ENCODE measurements at regions of chr22 and their contacts with region 1.

Region 1: GRCh38 chr22:41621099-41621910 is at the start of gene XRCC6:
- DNase-seq: peak; percentile 100
- ATAC-seq: peak; percentile 85
- H3K4me3 ChIP-seq: peak within 1 kb of the TSS; percentile 95
- H3K27ac ChIP-seq: peak within 1 kb of the TSS; percentile 97
- H3K4me1 ChIP-seq: peaks cover 5% of the 10 kb centered on the region
- H3K27me3 ChIP-seq: no peaks in the 10 kb centered on the region
- CTCF ChIP-seq: 0 out of 6 replicates have a peak, but pooled peaks of 1 of the 3 experiments have one; percentile 5
- EP300 ChIP-seq: no peak; a peak in 1 of 4 replicates
- POLR2A ChIP-seq: peak; percentile 90
- RAD21 ChIP-seq: no peak
- polyA plus RNA-seq, gene XRCC6: 186 to 334 TPM

Region 2: GRCh38 chr22:41576877-41577276 is 44.4 kb before region 1 on chr22:
- CTCF ChIA-PET with region 1: interaction called, 3 read pairs
- POLR2A ChIA-PET with region 1: interaction called, 3 read pairs
- RAD21 ChIA-PET with region 1: interaction called, 4 read pairs
- SMC1A ChIA-PET with region 1: interaction called, 3 read pairs
- in situ Hi-C with region 1: no loop called
- intact Hi-C with region 1: loop called (anchors 2 kb)
- DNase-seq: no peak
- ATAC-seq: peak; percentile 92
- H3K4me3 ChIP-seq: no peak overlapping the region
- H3K27ac ChIP-seq: no peak overlapping the region
- H3K4me1 ChIP-seq: no peaks in the 10 kb centered on the region
- H3K27me3 ChIP-seq: no peaks in the 10 kb centered on the region
- CTCF ChIP-seq: peak; percentile 62 to 84 (median 76)
- EP300 ChIP-seq: no peak
- POLR2A ChIP-seq: no peak
- RAD21 ChIP-seq: peak; percentile 66

Region 3: DNA sequence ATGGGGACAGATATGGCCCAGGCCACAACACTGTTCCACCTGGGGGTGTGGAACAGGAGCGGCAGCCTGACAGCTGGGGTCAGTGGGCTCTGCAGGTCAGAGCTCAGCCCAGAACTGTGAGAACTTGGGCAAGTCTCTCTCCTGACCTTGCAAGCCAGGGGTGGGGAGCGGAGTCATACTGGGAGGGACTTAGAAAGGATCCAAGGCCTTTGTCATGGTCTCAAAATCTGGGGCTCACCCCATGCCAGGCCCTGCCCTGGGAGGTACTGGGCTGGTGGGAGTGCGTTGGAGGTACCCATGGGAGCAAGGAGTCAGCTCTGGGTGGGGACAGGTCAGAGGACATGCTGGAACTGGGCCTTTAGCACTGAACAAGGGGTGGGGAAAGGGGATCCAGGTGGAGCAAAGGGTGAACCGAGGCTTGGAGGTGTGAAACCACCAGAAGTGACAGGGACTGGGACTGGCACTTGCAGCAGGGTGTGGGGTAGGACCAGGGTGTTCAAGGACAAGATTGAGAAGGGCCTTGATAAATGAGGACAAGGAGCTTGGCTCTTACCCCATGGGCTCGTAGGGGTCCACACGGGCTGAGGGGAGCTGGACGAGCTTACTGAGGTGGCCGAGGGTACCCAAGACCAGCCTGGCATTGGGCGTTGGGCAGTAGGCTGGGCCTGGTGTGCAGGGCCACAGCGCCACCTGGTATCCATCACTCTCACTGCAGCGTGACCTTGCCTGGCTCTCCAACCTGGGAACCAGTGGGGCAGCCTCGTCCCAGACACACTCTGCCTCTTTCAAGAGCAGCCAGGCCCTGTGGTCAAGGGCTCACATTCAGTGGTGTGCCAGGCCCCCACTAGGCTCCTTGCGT is 24.3 kb before region 1 on chr22:
- CTCF ChIA-PET with region 1: interaction called, 29 read pairs
- POLR2A ChIA-PET with region 1: no interaction called
- RAD21 ChIA-PET with region 1: interaction called, 4 read pairs
- SMC1A ChIA-PET with region 1: interaction called, 3 read pairs
- in situ Hi-C with region 1: no loop called
- intact Hi-C with region 1: no loop called
- DNase-seq: no peak
- ATAC-seq: peak; percentile 98
- H3K4me3 ChIP-seq: no peak overlapping the region
- H3K27ac ChIP-seq: no peak overlapping the region
- H3K4me1 ChIP-seq: no peaks in the 10 kb centered on the region
- H3K27me3 ChIP-seq: no peaks in the 10 kb centered on the region
- CTCF ChIP-seq: peak; percentile 63 to 83 (median 74)
- EP300 ChIP-seq: no peak
- POLR2A ChIP-seq: no peak
- RAD21 ChIP-seq: peak; percentile 58

Region 4: GRCh38 chr22:41666661-41667258 is 45.5 kb after region 1 on chr22:
- CTCF ChIA-PET with region 1: interaction called, 16 read pairs
- POLR2A ChIA-PET with region 1: interaction called, 6 read pairs
- RAD21 ChIA-PET with region 1: interaction called, 4 read pairs
- SMC1A ChIA-PET with region 1: interaction called, 3 read pairs
- in situ Hi-C with region 1: no loop called
- intact Hi-C with region 1: no loop called
- DNase-seq: peak; percentile 72
- ATAC-seq: peak; percentile 96
- H3K4me3 ChIP-seq: peak overlapping the region; percentile 14; the same call in 1 of the 2 replicates
- H3K27ac ChIP-seq: peak overlapping the region; percentile 76
- H3K4me1 ChIP-seq: peaks cover 3% of the 10 kb centered on the region; the same call in 1 of the 2 replicates
- H3K27me3 ChIP-seq: no peaks in the 10 kb centered on the region
- CTCF ChIP-seq: peak; percentile 98 to 100 (median 100); a peak in 5 of 6 replicates
- EP300 ChIP-seq: no peak
- POLR2A ChIP-seq: peak; percentile 94
- RAD21 ChIP-seq: peak; percentile 66

Measured in GM12878 (cell line).